PC-9 (cell line): ENCODE measurements at regions of chr2 and their contacts with region 1.

Region 1: GRCh38 chr2:1586923-1587840 is 157.1 kb downstream of the PXDN start:
- DNase-seq: peak; percentile 77 to 84
- H3K4me3 ChIP-seq: peak overlapping the region; percentile 54; the same call in 1 of the 2 replicates
- H3K27ac ChIP-seq: peak overlapping the region; percentile 78
- H3K4me1 ChIP-seq: peaks cover 23% of the 10 kb centered on the region
- H3K27me3 ChIP-seq: peaks cover 18% of the 10 kb centered on the region
- CTCF ChIP-seq: no peak

Region 2: GRCh38 chr2:1605102-1606045 is 18.2 kb after region 1 on chr2:
- CTCF ChIA-PET with region 1: no interaction called
- POLR2A ChIA-PET with region 1: no interaction called
- intact Hi-C with region 1: no loop called
- DNase-seq: no peak
- H3K4me3 ChIP-seq: no peak overlapping the region
- H3K27ac ChIP-seq: no peak overlapping the region
- H3K4me1 ChIP-seq: peaks cover 20% of the 10 kb centered on the region
- H3K27me3 ChIP-seq: peaks cover 26% of the 10 kb centered on the region; the same call in 1 of the 2 replicates
- CTCF ChIP-seq: no peak

Region 3: DNA sequence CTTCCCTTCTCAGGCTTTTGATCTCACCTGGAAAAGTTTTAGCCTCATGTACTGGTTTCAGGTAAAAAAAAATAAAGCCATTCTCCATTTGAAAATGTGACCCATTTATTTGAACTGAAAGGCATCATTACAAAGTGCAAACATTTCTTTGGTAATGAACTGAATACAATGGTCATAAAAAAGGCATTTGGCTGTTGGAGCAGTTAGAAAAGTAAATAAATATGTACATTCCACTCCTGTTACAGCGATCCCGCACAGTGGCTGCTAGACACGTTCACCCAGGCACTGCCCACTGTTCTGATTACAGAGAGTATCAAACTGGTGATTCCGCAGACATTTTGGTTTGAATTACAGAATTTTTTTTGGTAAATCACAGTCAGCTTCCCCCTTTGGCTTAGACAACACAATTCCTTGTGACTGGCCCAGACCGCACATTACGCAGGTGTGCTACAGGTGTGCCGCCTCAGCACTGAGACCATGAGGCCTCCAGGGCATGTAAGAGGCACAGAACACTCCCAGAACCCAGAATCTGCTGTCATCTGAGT is 44.7 kb after region 1 on chr2:
- CTCF ChIA-PET with region 1: no interaction called
- POLR2A ChIA-PET with region 1: no interaction called
- intact Hi-C with region 1: loop called (anchors 2 kb)
- DNase-seq: peak; percentile 67 to 96
- H3K4me3 ChIP-seq: no peak overlapping the region
- H3K27ac ChIP-seq: peak overlapping the region; percentile 81
- H3K4me1 ChIP-seq: peaks cover 78% of the 10 kb centered on the region
- H3K27me3 ChIP-seq: peaks cover 18% of the 10 kb centered on the region; the same call in 1 of the 2 replicates
- CTCF ChIP-seq: no peak